ENCODE measurements at regions of chr12 and their contacts with region 1.

Region 1: GRCh38 chr12:122051231-122051876 is 27.2 kb upstream of the MLXIP start:
- DNase-seq: no peak
- H3K4me3 ChIP-seq: no peak overlapping the region
- H3K27ac ChIP-seq: peak overlapping the region in 1 of 2 experiments; percentile 24; a peak in 1 of 4 replicates
- H3K4me1 ChIP-seq: peaks cover 3% of the 10 kb centered on the region in 2 experiments; a peak in 1 of 4 replicates
- H3K27me3 ChIP-seq: no peaks in the 10 kb centered on the region
- CTCF ChIP-seq: no peak
- EP300 ChIP-seq: no peak
- RAD21 ChIP-seq: no peak

Region 2: DNA sequence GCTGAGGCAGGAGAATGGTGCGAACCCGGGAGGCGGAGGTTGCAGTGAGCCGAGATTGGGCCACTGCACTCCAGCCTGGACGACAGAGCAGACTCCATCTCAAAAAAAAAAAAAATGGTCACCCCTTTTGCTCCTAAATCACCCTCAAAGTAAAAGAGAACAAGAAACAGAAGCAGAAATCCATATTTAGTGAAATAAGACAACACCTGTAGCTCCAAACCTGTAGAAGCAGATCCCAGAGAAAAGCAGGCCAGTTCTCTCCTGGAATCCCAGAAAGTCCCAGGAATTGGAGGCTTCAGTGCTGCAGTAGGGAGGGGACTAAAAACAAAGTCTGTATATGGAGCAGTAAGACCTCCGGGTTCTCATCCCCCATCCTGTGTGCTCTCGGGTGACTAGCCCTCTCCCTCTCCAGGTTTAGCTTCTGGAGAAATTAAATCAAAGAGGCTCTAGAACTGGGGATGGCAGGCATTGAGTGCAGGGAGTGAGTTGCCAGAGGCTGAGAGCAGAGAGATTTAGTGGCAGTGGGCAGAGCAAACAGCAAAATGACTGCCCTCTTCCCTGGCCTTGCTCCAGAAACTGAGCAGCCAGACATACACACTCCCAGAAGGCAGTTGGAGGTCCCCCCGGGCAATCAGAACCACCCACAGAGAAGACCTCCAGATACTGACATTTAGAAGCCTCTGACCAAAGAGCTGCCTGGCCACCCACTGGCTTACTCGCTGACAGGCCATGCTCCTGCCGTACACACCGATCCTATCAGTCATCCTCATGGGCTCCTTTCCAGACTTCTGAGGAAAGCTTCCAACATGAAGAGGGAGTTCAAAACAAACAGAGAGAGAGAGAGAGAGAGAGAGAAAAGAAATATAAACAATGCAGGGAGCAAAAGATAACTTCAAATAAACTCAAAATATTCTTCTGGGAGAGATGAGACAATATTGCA is 20.9 kb after region 1 on chr12:
- CTCF ChIA-PET with region 1: interaction called, 17 read pairs
- POLR2A ChIA-PET with region 1: no interaction called
- DNase-seq: peak; percentile 83
- H3K4me3 ChIP-seq: peak overlapping the region in 1 of 2 experiments; percentile 24; a peak in 2 of 4 replicates
- H3K27ac ChIP-seq: peak overlapping the region; percentile 72 to 81
- H3K4me1 ChIP-seq: peaks cover 9 to 13% of the 10 kb centered on the region in 2 experiments; a peak in 3 of 4 replicates
- H3K27me3 ChIP-seq: no peaks in the 10 kb centered on the region
- CTCF ChIP-seq: no peak
- EP300 ChIP-seq: peak in 1 of 2 experiments; percentile 52; a peak in 2 of 4 replicates
- RAD21 ChIP-seq: peak; percentile 24; the same call in 1 of the 2 replicates

Region 3: GRCh38 chr12:122107261-122107660 is 55.9 kb after region 1 on chr12:
- CTCF ChIA-PET with region 1: interaction called, 34 read pairs
- POLR2A ChIA-PET with region 1: no interaction called
- DNase-seq: no peak
- H3K4me3 ChIP-seq: no peak overlapping the region
- H3K27ac ChIP-seq: peak overlapping the region in 1 of 2 experiments; percentile 83; a peak in 2 of 4 replicates
- H3K4me1 ChIP-seq: peaks cover 2 to 33% of the 10 kb centered on the region in 2 experiments; a peak in 3 of 4 replicates
- H3K27me3 ChIP-seq: no peaks in the 10 kb centered on the region
- CTCF ChIP-seq: no peak
- EP300 ChIP-seq: no peak
- RAD21 ChIP-seq: no peak

Region 4: GRCh38 chr12:122130150-122130549 is 78.8 kb after region 1 on chr12:
- CTCF ChIA-PET with region 1: interaction called, 157 read pairs
- POLR2A ChIA-PET with region 1: no interaction called
- DNase-seq: no peak
- H3K4me3 ChIP-seq: no peak overlapping the region
- H3K27ac ChIP-seq: peak overlapping the region in 1 of 2 experiments; percentile 22; a peak in 1 of 4 replicates
- H3K4me1 ChIP-seq: no peaks in the 10 kb centered on the region; a peak in 1 of 4 replicates
- H3K27me3 ChIP-seq: no peaks in the 10 kb centered on the region
- CTCF ChIP-seq: no peak
- EP300 ChIP-seq: no peak
- RAD21 ChIP-seq: no peak

Measured in SK-N-SH (cell line).